Pancreas (tissue), 10 donors: ENCODE measurements at regions of chr12 and their contacts with region 1.

Region 1: GRCh38 chr12:7108796-7109571 is at the start of gene C1RL:
- DNase-seq: peak; percentile 90 to 99 (median 93)
- ATAC-seq: peak; percentile 79 to 88 (median 86)
- H3K4me3 ChIP-seq: peak within 1 kb of the TSS; percentile 39 to 71 (median 54)
- H3K27ac ChIP-seq: peak within 1 kb of the TSS; percentile 69 to 98 (median 91)
- H3K4me1 ChIP-seq: peaks cover 5 to 17% (median 16%) of the 10 kb centered on the region in 3 donors
- H3K27me3 ChIP-seq: no peaks in the 10 kb centered on the region
- CTCF ChIP-seq: peak; percentile 93 to 98 (median 97)
- total RNA-seq, gene C1RL: 36.8 to 57.7 (median 44.7) TPM

Region 2: DNA sequence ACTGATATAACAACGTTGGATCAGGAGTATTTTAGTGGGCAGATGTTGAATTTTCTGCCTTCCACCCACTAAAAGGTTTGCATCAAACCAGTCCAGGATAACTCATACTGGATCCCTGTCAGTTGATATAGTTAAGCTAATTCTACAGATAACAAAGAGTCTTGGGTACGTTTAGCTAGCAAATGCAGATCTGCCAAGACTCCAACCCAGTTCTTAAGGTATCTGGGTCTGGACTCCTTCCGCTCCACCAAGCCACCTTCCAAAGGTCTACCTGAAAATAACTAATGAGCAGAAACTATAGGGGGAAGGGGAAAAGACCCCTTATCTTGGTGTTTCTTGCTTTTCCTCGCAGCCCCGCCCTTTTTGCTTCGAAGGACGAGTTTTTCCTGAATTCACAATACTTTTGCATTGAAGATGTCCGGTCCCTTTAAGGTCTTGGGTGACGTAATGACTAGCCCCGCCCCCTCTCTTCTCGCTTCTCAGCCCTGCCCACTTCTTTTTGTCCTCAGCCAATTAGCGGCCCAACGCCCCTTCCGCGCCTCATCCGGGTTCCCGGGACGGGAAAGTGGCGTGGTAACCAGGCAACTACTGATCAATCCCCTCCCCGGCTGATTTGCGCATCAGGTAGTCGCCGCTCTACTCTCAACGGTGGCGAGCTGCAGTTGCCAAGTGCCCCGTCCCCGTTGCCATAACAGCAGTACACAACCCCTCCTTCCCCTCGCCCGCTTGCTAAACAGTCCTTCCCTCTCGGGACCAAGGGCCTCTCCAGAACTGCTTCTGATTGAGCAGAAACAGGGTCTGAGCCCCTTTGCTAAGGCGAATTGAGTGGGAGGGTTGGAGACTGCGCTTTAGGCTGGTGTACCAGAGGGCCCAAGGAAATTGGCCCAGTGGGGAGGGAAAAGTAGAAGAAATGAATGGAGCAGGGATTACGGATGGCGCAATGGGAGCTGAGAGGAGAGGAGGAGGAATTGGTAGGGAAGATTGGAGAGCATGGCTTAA is 204.4 kb before region 1 on chr12 and contains the start of gene LRRC23:
- intact Hi-C with region 1: no loop called
- DNase-seq: peak; percentile 95 to 99 (median 98)
- ATAC-seq: peak; percentile 97
- H3K4me3 ChIP-seq: peak within 1 kb of the TSS; percentile 40 to 63 (median 48)
- H3K27ac ChIP-seq: peak within 1 kb of the TSS; percentile 69 to 77 (median 72)
- H3K4me1 ChIP-seq: peaks cover 4 to 15% (median 4%) of the 10 kb centered on the region in 3 donors
- H3K27me3 ChIP-seq: no peaks in the 10 kb centered on the region
- CTCF ChIP-seq: no peak
- total RNA-seq, gene LRRC23: 1.7 to 5.2 (median 3.4) TPM

Region 3: DNA sequence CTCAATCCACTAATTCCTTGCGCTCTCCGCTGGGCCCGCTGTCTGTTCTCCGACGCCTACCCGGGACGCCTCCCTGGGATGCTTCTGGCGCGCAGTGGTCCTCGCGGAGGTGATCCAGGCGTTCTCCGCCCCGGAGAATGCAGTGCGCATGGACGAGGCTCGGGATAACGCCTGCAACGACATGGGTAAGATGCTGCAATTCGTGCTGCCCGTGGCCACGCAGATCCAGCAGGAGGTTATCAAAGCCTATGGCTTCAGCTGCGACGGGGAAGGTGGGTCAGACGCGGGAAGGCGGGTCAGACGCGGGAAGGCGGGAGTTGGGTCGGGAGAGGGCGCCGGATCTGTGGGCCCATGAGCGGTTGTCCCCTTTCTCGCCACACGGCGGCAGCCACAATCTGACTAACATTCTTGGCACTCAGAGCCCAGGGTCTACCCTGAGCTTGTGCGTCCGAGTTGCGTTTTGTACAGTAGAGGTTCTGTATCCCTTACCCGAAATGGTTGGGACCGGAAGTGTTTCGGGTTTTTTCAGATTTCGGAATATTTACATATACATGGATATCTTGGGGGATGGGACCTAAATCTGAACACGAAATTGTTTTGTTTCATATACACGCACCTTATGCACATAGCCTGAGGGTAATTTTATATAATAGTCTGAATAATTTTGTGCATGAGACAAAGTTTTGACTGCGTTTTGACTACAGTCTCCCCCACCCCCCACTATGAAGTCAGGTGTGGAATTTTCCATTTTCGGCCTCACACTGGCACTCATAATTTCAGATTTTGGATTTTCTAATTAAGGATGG is 164.4 kb before region 1 on chr12:
- intact Hi-C with region 1: loop called in 1 of 3 experiments (anchors 10 kb)
- DNase-seq: peak; percentile 91 to 95 (median 92)
- ATAC-seq: peak; percentile 57 to 77 (median 68)
- H3K4me3 ChIP-seq: peak overlapping the region; percentile 54 to 71 (median 66)
- H3K27ac ChIP-seq: peak overlapping the region; percentile 91 to 97 (median 96)
- H3K4me1 ChIP-seq: peaks cover 13 to 23% (median 18%) of the 10 kb centered on the region in 3 donors
- H3K27me3 ChIP-seq: no peaks in the 10 kb centered on the region
- CTCF ChIP-seq: peak; percentile 52 to 84 (median 70)

Region 4: GRCh38 chr12:7472060-7472459 is 363.1 kb after region 1 on chr12:
- intact Hi-C with region 1: no loop called
- DNase-seq: peak in 2 of 6 donors; percentile 30 to 34
- ATAC-seq: no peak
- H3K4me3 ChIP-seq: no peak overlapping the region
- H3K27ac ChIP-seq: no peak overlapping the region
- H3K4me1 ChIP-seq: no peaks in the 10 kb centered on the region
- H3K27me3 ChIP-seq: no peaks in the 10 kb centered on the region
- CTCF ChIP-seq: no peak